B cell (primary cell): ENCODE measurements at regions of chr9 and their contacts with region 1.

Region 1: GRCh38 chr9:127450830-127451724 is at the starts of genes LRSAM1 and RPL12:
- DNase-seq: peak; percentile 98
- ATAC-seq: peak; percentile 79
- H3K4me3 ChIP-seq: peak within 1 kb of the TSS; percentile 73 to 92 (median 82)
- H3K4me3 Mint-ChIP-seq: peak within 1 kb of the TSS; percentile 97
- H3K27ac ChIP-seq: peak within 1 kb of the TSS; percentile 84 to 85
- H3K27ac Mint-ChIP-seq: peak within 1 kb of the TSS; percentile 98
- H3K4me1 ChIP-seq: peaks cover 28 to 46% of the 10 kb centered on the region in 2 donors
- H3K4me1 Mint-ChIP-seq: peaks cover 58% of the 10 kb centered on the region
- H3K27me3 ChIP-seq: no peaks in the 10 kb centered on the region
- H3K27me3 Mint-ChIP-seq: no peaks in the 10 kb centered on the region
- CTCF ChIP-seq: peak; percentile 26
- total RNA-seq, gene LRSAM1: 31.5 and 39.8 TPM in 2 replicates
- total RNA-seq, gene RPL12: 1,232 and 1,334 TPM in 2 replicates

Region 2: GRCh38 chr9:126626127-126626925 is 824.8 kb before region 1 on chr9:
- CTCF ChIA-PET with region 1: no interaction called
- POLR2A ChIA-PET with region 1: no interaction called
- intact Hi-C with region 1: no loop called
- DNase-seq: peak; percentile 32
- ATAC-seq: no peak
- H3K4me3 ChIP-seq: peak overlapping the region in 4 of 5 experiments; percentile 39 to 63 (median 54)
- H3K4me3 Mint-ChIP-seq: peak overlapping the region; percentile 89
- H3K27ac ChIP-seq: no peak overlapping the region
- H3K27ac Mint-ChIP-seq: no peak overlapping the region
- H3K4me1 ChIP-seq: peaks cover 33 to 45% of the 10 kb centered on the region in 2 donors
- H3K4me1 Mint-ChIP-seq: peaks cover 16% of the 10 kb centered on the region
- H3K27me3 ChIP-seq: peaks cover 0 to 97% (median 71%) of the 10 kb centered on the region in 4 experiments
- H3K27me3 Mint-ChIP-seq: peaks cover 69% of the 10 kb centered on the region
- CTCF ChIP-seq: no peak

Region 3: GRCh38 chr9:127166651-127167524 is 284.2 kb before region 1 on chr9:
- CTCF ChIA-PET with region 1: no interaction called
- POLR2A ChIA-PET with region 1: no interaction called
- intact Hi-C with region 1: loop called (anchors 2 kb)
- DNase-seq: peak; percentile 92
- ATAC-seq: peak; percentile 96
- H3K4me3 ChIP-seq: peak overlapping the region in 1 of 5 experiments; percentile 15
- H3K4me3 Mint-ChIP-seq: peak overlapping the region; percentile 60
- H3K27ac ChIP-seq: peak overlapping the region; percentile 8 to 59
- H3K27ac Mint-ChIP-seq: peak overlapping the region; percentile 85
- H3K4me1 ChIP-seq: peaks cover 24 to 31% of the 10 kb centered on the region in 2 donors
- H3K4me1 Mint-ChIP-seq: peaks cover 47% of the 10 kb centered on the region
- H3K27me3 ChIP-seq: no peaks in the 10 kb centered on the region
- H3K27me3 Mint-ChIP-seq: no peaks in the 10 kb centered on the region
- CTCF ChIP-seq: no peak

Region 4: GRCh38 chr9:127224178-127224882 is 226.7 kb before region 1 on chr9:
- CTCF ChIA-PET with region 1: no interaction called
- POLR2A ChIA-PET with region 1: interaction called, 6 read pairs
- intact Hi-C with region 1: loop called (anchors 1 kb)
- DNase-seq: peak; percentile 94
- ATAC-seq: peak; percentile 73
- H3K4me3 ChIP-seq: peak overlapping the region in 4 of 5 experiments; percentile 39 to 75 (median 52)
- H3K4me3 Mint-ChIP-seq: peak overlapping the region; percentile 93
- H3K27ac ChIP-seq: peak overlapping the region in 1 of 2 donors; percentile 39
- H3K27ac Mint-ChIP-seq: peak overlapping the region; percentile 95
- H3K4me1 ChIP-seq: peaks cover 21 to 33% of the 10 kb centered on the region in 2 donors
- H3K4me1 Mint-ChIP-seq: peaks cover 43% of the 10 kb centered on the region
- H3K27me3 ChIP-seq: peaks cover 0 to 9% (median 3%) of the 10 kb centered on the region in 4 experiments
- H3K27me3 Mint-ChIP-seq: peaks cover 4% of the 10 kb centered on the region
- CTCF ChIP-seq: no peak

Region 5: GRCh38 chr9:127396808-127397497 is 54.1 kb before region 1 on chr9 and contains the start of gene SLC2A8:
- CTCF ChIA-PET with region 1: interaction called, 6 read pairs
- POLR2A ChIA-PET with region 1: interaction called, 21 read pairs
- intact Hi-C with region 1: loop called (anchors 1 kb)
- DNase-seq: peak; percentile 100
- ATAC-seq: peak; percentile 91
- H3K4me3 ChIP-seq: peak within 1 kb of the TSS; percentile 26 to 77 (median 57)
- H3K4me3 Mint-ChIP-seq: peak within 1 kb of the TSS; percentile 86
- H3K27ac ChIP-seq: peak within 1 kb of the TSS in 1 of 2 donors; percentile 74
- H3K27ac Mint-ChIP-seq: peak within 1 kb of the TSS; percentile 79
- H3K4me1 ChIP-seq: peaks cover 4 to 16% of the 10 kb centered on the region in 2 donors
- H3K4me1 Mint-ChIP-seq: peaks cover 14% of the 10 kb centered on the region
- H3K27me3 ChIP-seq: peaks cover 0 to 7% (median 2%) of the 10 kb centered on the region in 4 experiments
- H3K27me3 Mint-ChIP-seq: no peaks in the 10 kb centered on the region
- CTCF ChIP-seq: peak; percentile 34
- total RNA-seq, gene SLC2A8: 14.2 and 18.7 TPM in 2 replicates

Region 6: DNA sequence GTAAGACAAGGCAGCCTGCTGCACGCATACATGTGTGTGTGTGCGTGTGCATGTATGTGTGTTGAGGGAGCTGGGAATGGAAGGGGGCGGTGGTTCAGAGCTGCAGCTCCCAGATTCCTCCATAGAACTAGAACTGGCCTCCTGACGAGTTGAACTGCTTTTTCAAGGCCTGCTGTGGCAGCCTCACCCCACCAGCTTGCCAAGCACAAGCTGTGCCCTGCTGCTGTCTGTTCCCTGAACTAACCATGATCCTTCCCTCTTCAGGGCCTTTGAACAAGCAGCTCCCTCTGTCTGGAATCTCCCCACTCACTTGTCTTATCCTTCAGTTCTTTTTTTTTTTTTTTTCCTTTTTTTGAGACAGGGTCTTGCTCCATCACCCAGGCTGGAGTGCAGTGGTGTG is 22.9 kb after region 1 on chr9:
- CTCF ChIA-PET with region 1: no interaction called
- POLR2A ChIA-PET with region 1: no interaction called
- intact Hi-C with region 1: no loop called
- DNase-seq: no peak
- ATAC-seq: no peak
- H3K4me3 ChIP-seq: no peak overlapping the region
- H3K4me3 Mint-ChIP-seq: no peak overlapping the region
- H3K27ac ChIP-seq: no peak overlapping the region
- H3K27ac Mint-ChIP-seq: no peak overlapping the region
- H3K4me1 ChIP-seq: no peaks in the 10 kb centered on the region
- H3K4me1 Mint-ChIP-seq: no peaks in the 10 kb centered on the region
- H3K27me3 ChIP-seq: no peaks in the 10 kb centered on the region
- H3K27me3 Mint-ChIP-seq: no peaks in the 10 kb centered on the region
- CTCF ChIP-seq: no peak

Region 7: DNA sequence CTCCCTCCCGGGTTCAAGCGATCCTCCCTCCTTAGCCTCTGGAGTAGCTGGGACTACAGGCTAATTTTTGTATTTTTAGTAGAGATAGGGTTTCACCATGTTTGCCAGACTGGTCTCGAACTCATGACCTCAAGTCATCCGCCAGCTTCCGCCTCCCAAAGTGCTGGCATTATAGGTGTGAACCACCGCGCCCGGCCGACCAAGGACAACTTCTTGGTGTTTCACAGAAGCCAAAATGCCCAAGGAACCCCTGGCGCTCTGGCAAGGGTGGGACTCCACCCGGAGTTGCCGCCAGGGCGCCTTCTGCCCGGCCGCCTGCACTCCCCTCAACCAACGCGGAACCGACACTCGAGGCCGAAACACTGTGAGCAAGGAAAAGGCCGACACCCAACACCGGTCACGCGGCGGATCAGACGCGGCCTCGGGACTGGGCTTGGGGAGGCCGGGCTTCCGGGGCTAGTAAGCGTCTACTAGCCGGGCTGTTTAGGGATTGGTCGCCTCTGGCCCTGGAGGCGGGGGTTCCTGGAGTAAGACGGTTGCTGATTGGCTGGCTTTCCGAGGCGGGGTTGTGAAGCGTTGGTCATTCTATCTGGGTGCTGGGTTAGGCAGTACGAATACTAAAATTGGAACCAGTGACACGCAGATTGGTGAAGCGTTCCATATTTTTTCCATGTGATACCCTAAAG is 248.1 kb after region 1 on chr9:
- CTCF ChIA-PET with region 1: no interaction called
- POLR2A ChIA-PET with region 1: no interaction called
- intact Hi-C with region 1: no loop called
- DNase-seq: peak; percentile 92
- ATAC-seq: peak; percentile 100
- H3K4me3 ChIP-seq: peak overlapping the region; percentile 34 to 59 (median 46)
- H3K4me3 Mint-ChIP-seq: peak overlapping the region; percentile 82
- H3K27ac ChIP-seq: peak overlapping the region in 1 of 2 donors; percentile 67
- H3K27ac Mint-ChIP-seq: peak overlapping the region; percentile 65
- H3K4me1 ChIP-seq: peaks cover 6 to 12% of the 10 kb centered on the region in 2 donors
- H3K4me1 Mint-ChIP-seq: peaks cover 14% of the 10 kb centered on the region
- H3K27me3 ChIP-seq: no peaks in the 10 kb centered on the region
- H3K27me3 Mint-ChIP-seq: no peaks in the 10 kb centered on the region
- CTCF ChIP-seq: peak; percentile 19

Region 8: DNA sequence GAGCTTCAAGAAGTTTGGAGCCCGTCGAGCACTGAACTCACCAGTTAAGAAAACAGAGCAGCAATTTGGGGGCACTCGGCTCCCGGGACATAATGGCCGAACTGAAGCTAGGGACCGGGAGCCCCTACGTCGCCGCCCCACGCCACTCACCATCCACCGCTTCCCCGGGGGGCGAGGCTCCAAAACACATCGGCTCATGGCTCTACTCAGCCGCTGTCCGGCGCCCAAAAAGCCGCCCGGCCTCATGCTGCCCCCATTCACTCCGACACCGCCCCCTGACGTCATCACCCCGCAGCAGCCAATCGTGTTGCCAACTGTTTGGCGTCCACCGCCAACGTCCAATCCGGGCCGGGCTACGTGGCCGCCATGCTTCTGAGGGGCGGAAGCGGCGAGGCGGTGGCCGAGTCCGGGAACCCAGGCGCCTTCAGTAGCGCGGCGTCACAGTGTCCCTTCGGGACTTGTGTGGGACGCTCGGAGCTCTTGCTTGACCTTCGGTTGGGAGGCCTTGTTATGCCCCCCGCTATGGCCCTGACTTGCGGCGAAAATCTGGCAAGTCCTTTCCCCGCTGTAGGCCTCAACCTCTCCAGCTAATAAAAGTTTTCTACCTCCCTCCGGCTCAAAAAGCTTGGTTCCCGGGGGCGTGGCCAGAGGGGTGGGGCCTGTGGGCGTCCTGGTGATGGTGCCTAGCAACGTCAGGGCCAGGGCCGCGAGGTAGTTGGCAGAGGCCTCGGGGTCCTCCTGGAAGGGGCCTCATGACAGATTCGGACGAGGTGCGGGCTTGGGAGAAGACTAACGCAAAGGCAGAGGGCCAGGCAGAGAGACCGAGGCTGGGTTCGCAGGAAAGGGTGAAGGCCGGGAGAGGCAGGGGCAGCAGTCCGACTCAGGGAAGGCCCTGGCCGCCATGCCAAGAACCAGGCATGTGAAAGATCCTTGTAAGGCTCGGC is 264.6 kb after region 1 on chr9 and contains the starts of genes PTRH1 and TTC16:
- CTCF ChIA-PET with region 1: no interaction called
- POLR2A ChIA-PET with region 1: interaction called, 3 read pairs
- intact Hi-C with region 1: loop called (anchors 5 kb)
- DNase-seq: peak; percentile 98
- ATAC-seq: peak; percentile 95
- H3K4me3 ChIP-seq: peak within 1 kb of the TSS; percentile 16 to 90 (median 66)
- H3K4me3 Mint-ChIP-seq: peak within 1 kb of the TSS; percentile 97
- H3K27ac ChIP-seq: peak within 1 kb of the TSS; percentile 35 to 81
- H3K27ac Mint-ChIP-seq: peak within 1 kb of the TSS; percentile 90
- H3K4me1 ChIP-seq: peaks cover 9 to 16% of the 10 kb centered on the region in 2 donors
- H3K4me1 Mint-ChIP-seq: peaks cover 26% of the 10 kb centered on the region
- H3K27me3 ChIP-seq: no peaks in the 10 kb centered on the region
- H3K27me3 Mint-ChIP-seq: no peaks in the 10 kb centered on the region
- CTCF ChIP-seq: no peak
- total RNA-seq, gene PTRH1: 6.2 and 7.6 TPM in 2 replicates
- total RNA-seq, gene TTC16: not detected in 2 replicates